Upper lobe of right lung (tissue), 1 donor: ENCODE measurements at regions of chr19 and their contacts with region 1.

Region 1: DNA sequence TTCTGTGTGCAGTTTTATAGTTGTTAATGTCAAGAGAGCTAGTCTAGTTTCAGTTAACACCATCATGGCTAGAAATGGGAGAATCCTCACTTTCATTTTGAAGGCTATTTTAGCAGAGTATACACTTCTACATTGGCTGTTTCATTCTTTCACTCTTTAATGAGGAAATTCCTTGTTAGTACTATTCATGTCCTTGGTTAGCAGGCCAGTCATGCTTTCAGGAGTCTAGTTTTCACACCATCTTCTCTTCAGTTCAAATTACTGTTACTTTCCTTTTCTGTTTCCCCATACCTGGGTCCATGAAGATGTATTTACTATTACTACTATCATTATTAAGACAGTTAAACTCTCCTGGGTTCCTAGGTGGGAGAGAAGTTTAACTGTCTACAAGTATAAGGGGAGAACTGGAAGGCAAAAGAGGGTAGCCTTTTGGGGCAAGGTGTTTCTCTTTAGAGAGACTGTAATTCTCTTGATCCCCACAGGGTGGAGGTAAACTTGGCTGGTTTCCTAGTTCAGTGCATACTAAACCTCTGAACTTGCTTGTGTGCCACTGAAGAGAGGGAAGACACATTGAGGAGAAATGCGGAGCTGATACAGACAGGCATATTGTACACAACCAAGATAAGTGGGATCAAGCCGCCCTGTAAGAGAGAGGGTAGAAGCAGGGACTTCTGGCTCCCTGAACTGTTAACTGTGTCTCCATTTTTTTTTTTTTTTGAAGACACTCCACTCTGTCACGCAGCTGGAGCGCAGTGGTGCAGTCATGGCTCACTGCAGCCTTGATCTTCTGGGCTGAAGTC is 41.3 kb upstream of the IGFL4 start:
- DNase-seq: no peak
- ATAC-seq: peak; percentile 81
- H3K4me3 ChIP-seq: no peak overlapping the region
- H3K27ac ChIP-seq: no peak overlapping the region
- H3K4me1 ChIP-seq: peaks cover 6% of the 10 kb centered on the region
- H3K27me3 ChIP-seq: peaks cover 27% of the 10 kb centered on the region
- CTCF ChIP-seq: peak; percentile 70

Region 2: GRCh38 chr19:46181388-46181779 is 99.3 kb after region 1 on chr19:
- intact Hi-C with region 1: loop called (anchors 10 kb)
- DNase-seq: no peak
- ATAC-seq: no peak
- H3K4me3 ChIP-seq: no peak overlapping the region
- H3K27ac ChIP-seq: no peak overlapping the region
- H3K4me1 ChIP-seq: no peaks in the 10 kb centered on the region
- H3K27me3 ChIP-seq: peaks cover 6% of the 10 kb centered on the region
- CTCF ChIP-seq: no peak

Region 3: DNA sequence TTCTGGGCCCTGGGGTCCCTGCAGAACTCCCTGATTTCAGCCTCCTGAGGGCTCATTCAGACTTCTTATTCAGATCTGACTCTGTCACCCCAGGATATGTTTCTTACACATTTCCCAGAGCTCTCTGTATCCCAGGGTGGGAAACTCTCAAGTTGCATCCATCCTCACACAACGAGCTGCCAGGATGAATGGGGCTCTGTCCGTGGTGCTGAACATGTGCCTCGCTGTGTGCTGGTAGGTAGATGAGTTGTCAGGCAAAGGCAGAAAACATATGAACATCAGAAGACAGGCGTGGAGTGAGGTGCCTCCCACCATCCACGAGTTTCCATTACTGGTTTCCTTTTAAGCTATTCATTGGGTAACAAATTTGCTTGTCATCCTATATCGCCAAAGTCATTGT is 136.0 kb after region 1 on chr19:
- intact Hi-C with region 1: no loop called
- DNase-seq: no peak
- ATAC-seq: no peak
- H3K4me3 ChIP-seq: no peak overlapping the region
- H3K27ac ChIP-seq: no peak overlapping the region
- H3K4me1 ChIP-seq: no peaks in the 10 kb centered on the region
- H3K27me3 ChIP-seq: no peaks in the 10 kb centered on the region
- CTCF ChIP-seq: no peak